HEK293 (cell line): ENCODE measurements at regions of chr1 and their contacts with region 1.

Region 1: GRCh38 chr1:12658531-12659453 is 14.9 kb downstream of the AADACL4 start:
- H3K4me3 ChIP-seq: no peak overlapping the region
- H3K27ac ChIP-seq: no peak overlapping the region
- H3K4me1 ChIP-seq: no peaks in the 10 kb centered on the region
- CTCF ChIP-seq: peak; percentile 85

Region 2: DNA sequence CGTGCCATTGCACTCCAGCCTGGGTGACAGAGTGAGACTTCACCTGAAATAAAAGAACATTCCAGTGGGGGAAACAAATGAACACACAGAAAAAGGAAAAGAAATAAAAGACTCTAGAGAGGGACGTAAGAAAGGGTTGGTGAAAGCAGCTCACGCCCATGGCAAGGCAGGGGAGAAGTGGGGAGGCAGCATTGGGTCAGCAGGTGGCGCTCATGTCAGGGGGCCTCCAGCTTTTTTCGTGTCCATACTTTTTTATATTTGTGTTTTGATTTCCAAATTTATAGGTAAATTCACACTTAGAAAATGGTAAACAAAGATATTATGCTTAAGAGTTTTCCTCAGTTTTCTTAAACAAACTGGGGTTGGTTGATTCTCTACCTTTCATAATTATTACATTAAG is 383.4 kb before region 1 on chr1:
- CTCF ChIA-PET with region 1: interaction called, 19 read pairs
- POLR2A ChIA-PET with region 1: interaction called, 4 read pairs
- H3K4me3 ChIP-seq: no peak overlapping the region
- H3K27ac ChIP-seq: no peak overlapping the region
- H3K4me1 ChIP-seq: no peaks in the 10 kb centered on the region
- CTCF ChIP-seq: peak; percentile 26; the same call in 1 of the 2 replicates

Region 3: DNA sequence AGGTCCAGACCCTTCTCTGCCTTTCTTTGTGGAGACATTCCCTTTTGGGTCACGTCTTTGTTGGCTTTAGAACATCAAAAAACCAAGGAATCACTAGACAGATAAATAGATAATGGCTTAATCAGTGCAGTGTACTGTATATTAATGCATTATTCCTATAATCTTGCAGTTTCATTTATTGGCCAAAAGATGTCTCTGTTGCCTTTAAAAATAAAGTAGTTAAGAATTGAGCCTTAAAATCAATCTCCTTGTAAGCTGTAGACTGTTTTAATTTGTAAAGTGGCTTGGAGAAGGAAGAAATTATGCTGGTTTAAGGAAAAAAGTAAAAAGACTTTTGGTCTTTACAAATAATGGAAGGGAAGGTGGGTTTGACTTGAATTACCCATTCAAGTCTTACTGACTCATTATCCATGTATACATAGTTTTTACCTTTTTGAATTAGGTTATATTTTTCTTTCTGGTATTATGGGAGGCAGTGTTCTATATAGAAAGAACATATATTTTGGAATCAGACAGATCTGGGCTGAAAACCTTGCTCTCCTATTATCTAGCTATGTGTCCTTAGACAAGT is 344.4 kb before region 1 on chr1:
- CTCF ChIA-PET with region 1: interaction called, 33 read pairs
- POLR2A ChIA-PET with region 1: no interaction called
- H3K4me3 ChIP-seq: no peak overlapping the region
- H3K27ac ChIP-seq: no peak overlapping the region
- H3K4me1 ChIP-seq: no peaks in the 10 kb centered on the region
- CTCF ChIP-seq: no peak

Region 4: DNA sequence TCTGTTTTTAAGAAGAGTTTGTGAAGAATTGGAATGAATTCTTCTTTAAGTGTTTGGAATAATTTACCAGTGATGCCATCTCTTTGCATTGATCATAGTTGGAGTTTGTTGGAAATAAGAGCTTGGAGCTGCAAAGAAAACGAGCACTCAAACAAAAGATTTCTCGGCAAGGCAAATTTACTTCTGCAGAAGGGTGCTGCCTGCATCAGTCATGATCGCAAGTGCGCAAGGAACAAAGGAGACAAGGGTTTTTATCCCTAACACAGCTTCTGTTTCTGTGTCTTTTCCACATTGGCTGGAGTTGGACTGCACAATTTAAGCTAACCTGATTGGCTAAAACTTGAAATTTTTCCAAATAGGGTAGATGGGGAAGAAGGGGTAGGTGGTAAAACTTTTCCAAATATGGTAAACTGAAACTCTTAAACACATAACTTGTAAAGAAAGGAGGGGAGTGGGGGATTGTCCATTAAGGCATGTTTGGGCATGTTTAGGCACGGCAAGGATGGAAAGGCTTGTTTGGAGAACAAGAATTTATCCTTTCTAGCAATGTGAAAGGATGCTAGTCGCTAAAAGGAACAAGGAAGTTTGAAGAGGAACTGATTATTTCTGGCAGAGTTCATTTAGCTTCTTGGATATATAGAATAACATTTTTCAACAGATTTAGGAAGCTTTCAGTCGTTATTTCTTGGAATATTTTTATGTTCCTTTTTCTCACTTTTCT is 18.4 kb before region 1 on chr1:
- CTCF ChIA-PET with region 1: interaction called, 11 read pairs
- POLR2A ChIA-PET with region 1: no interaction called
- H3K4me3 ChIP-seq: no peak overlapping the region
- H3K27ac ChIP-seq: no peak overlapping the region
- H3K4me1 ChIP-seq: no peaks in the 10 kb centered on the region
- CTCF ChIP-seq: no peak

Region 5: DNA sequence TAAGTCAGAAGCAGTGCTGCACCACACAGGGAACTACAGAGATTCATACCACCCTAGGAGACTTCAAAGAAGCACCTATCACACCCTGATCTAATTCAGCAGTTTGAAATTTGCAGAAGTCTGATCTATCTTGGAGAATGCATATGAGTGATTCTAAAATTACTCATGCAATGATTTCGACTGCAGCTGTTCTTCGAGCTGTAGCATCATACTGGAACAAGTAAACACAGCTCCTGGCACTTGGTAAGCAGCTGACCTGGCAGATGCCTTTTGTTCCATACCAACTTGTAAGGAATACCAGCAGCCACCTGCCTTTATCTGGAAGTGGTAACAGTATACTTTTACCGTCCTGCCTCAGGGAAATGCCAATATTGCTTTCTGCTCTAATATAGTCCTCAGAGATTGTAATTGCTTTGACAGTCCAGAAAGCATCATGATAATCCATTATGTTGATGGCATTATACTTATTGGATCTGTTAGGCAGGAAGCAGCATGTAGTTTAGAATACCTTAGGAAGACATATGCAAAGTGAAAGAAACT is 10.8 kb after region 1 on chr1:
- CTCF ChIA-PET with region 1: interaction called, 10 read pairs
- POLR2A ChIA-PET with region 1: no interaction called
- H3K4me3 ChIP-seq: no peak overlapping the region
- H3K27ac ChIP-seq: no peak overlapping the region
- H3K4me1 ChIP-seq: no peaks in the 10 kb centered on the region
- CTCF ChIP-seq: no peak